Naive thymus-derived CD4-positive, alpha-beta T cell (primary cell): ENCODE measurements at regions of chr5 and their contacts with region 1.

Region 1: DNA sequence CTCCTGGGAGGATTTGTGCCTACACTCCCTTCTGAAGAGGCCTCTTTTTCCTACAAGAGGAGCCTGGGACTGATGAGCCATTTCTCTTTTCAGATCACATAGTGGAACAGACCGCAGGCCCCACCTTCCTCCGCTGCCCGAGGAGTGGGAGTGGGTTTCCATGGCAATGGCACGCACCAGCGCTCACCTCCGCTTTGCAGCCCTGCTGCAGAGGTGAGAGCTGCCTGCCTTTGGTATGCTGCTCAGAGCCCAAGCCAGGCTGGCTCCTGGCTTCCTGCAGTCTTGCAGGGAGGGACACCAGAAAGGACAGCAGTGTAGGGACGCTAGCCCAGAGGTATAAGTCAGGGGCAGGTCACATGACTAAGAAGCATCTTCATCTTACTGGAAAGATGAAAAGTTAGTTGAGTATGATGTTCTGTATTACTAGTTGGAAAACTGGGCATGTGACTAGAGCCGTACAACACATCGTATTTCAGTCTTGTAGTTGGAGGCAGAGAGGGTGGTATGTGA is 12.4 kb downstream of the PTTG1 start:
- DNase-seq: no peak
- ATAC-seq: no peak
- H3K4me3 ChIP-seq: no peak overlapping the region
- H3K4me3 Mint-ChIP-seq: no peak overlapping the region
- H3K27ac ChIP-seq: no peak overlapping the region
- H3K27ac Mint-ChIP-seq: no peak overlapping the region
- H3K4me1 ChIP-seq: no peaks in the 10 kb centered on the region
- H3K4me1 Mint-ChIP-seq: peaks cover 0 to 14% (median 5%) of the 10 kb centered on the region in 7 donors
- H3K27me3 ChIP-seq: no peaks in the 10 kb centered on the region
- H3K27me3 Mint-ChIP-seq: peaks cover 0 to 16% (median 12%) of the 10 kb centered on the region in 5 donors

Region 2: GRCh38 chr5:160133071-160133917 is 300.8 kb before region 1 on chr5:
- CTCF ChIA-PET with region 1: no interaction called
- POLR2A ChIA-PET with region 1: no interaction called
- intact Hi-C with region 1: no loop called
- DNase-seq: no peak
- ATAC-seq: no peak
- H3K4me3 ChIP-seq: no peak overlapping the region
- H3K4me3 Mint-ChIP-seq: no peak overlapping the region
- H3K27ac ChIP-seq: no peak overlapping the region
- H3K27ac Mint-ChIP-seq: no peak overlapping the region
- H3K4me1 ChIP-seq: no peaks in the 10 kb centered on the region
- H3K4me1 Mint-ChIP-seq: no peaks in the 10 kb centered on the region
- H3K27me3 ChIP-seq: no peaks in the 10 kb centered on the region
- H3K27me3 Mint-ChIP-seq: peaks cover 0 to 4% (median 0%) of the 10 kb centered on the region in 5 donors

Region 3: GRCh38 chr5:160460377-160461049 is 26.4 kb after region 1 on chr5:
- CTCF ChIA-PET with region 1: interaction called, 10 read pairs
- POLR2A ChIA-PET with region 1: no interaction called
- intact Hi-C with region 1: loop called in 1 of 2 experiments (anchors 1 kb)
- DNase-seq: no peak
- ATAC-seq: no peak
- H3K4me3 ChIP-seq: no peak overlapping the region
- H3K4me3 Mint-ChIP-seq: no peak overlapping the region
- H3K27ac ChIP-seq: no peak overlapping the region
- H3K27ac Mint-ChIP-seq: no peak overlapping the region
- H3K4me1 ChIP-seq: peaks cover 0 to 3% of the 10 kb centered on the region in 2 donors
- H3K4me1 Mint-ChIP-seq: peaks cover 0 to 33% (median 14%) of the 10 kb centered on the region in 7 donors
- H3K27me3 ChIP-seq: no peaks in the 10 kb centered on the region
- H3K27me3 Mint-ChIP-seq: peaks cover 0 to 6% (median under 1%) of the 10 kb centered on the region in 5 donors